ENCODE measurements at regions of chr1 and their contacts with region 1.

Region 1: DNA sequence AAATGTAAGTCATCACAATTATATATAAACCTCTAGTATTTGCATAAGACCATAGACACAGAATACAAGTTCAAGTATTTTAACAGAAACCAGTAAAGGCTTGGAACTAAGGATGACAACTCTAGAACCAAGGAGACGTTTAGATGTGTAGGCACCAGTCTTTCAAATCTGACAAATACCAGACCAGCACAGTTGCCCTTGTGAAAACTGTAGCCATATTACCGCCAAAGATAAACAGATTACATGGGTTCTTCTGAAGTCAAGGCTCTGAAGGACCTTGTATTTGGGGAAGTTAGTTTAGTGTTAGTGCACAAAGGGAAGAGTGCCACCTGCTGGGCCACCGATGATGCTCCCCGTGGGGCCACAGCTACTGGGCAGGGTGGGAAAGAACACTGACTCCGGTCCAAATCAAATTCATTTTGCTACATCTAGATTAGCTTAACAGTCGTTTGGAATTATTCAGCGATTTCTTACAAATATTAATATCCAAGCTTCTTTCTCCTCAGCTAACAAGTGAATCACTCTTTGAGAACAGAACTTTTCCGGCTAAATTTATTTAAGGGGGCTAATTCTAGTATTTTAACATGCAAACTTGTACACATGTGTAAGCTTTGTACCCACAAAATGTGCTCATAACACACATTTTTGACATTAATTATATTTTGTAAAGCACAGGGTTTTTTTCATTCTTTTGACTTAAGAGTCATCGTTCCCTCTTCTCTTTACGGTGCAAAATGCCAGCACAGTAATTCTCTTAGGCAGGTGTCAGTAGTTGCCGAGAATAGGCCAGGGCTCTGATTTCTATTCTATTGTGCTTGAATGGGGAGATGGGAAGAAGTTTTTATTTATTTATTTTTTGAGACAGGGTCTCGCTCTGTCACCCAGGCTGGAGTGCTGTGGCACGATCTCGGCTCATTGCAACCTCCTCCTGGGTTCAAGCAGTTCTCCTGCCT is 8.0 kb upstream of the NIBAN1 start:
- DNase-seq: peak; percentile 59
- H3K4me3 Mint-ChIP-seq: no peak overlapping the region
- H3K27ac Mint-ChIP-seq: no peak overlapping the region
- H3K4me1 Mint-ChIP-seq: peaks cover 10% of the 10 kb centered on the region
- H3K27me3 Mint-ChIP-seq: peaks cover 31% of the 10 kb centered on the region

Region 2: DNA sequence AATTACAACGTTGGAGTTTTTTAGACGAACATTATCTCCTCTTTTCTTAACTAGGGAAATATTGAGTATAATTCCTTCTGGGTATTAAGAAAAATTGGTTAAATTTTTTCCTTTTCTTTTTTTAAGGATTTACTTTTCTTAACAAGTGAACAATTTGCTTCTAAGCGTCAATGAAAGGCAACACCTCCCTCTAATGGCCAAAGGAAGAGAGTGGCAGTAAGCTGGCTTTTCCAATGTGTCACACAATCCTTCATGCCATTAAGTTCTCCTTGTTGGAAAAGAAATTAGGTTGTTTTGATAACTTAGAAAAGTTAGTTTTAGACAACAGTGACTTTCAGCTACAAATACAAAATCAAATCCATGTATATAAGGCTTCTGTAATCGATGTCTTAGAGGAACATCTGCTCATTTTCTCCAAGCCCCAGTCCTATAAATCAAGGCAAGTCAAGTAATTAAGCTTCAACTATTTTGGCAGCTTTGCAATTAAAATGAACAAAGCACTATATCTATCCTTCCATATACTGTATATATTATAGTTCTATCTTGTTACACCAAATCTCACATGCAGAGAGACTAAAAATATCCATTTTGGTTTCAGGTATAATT is 290.5 kb before region 1 on chr1:
- intact Hi-C with region 1: loop called (anchors 5 kb)
- DNase-seq: no peak
- H3K4me3 Mint-ChIP-seq: no peak overlapping the region
- H3K27ac Mint-ChIP-seq: no peak overlapping the region
- H3K4me1 Mint-ChIP-seq: peaks cover 9% of the 10 kb centered on the region
- H3K27me3 Mint-ChIP-seq: no peaks in the 10 kb centered on the region

Region 3: DNA sequence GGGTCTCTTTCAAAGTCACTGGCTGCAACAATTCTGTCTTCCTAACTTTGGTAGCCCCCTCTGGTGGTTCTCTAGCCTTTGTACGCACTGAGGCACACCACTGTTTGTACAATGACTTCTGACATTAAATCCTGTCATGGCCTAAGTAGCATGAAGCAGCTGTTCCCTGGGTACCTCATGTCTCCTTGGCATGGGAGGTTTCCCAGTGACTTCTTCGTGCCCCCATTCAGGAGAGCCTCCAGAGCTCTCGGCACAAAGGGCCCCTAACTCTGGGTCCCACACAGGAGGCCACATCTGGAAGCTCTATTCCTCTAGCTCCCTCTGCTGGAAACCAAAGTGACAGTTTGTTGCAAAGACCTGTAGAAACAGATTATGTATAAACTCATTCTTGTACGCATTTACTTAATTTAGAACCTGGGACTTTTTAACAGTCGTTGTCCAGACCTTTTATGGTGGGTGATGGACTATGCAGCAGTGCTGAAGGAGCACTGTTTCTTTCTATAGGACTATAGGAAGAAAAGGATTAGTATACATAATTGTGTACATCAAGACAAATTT is 188.1 kb after region 1 on chr1:
- intact Hi-C with region 1: loop called (anchors 5 kb)
- DNase-seq: peak; percentile 26
- H3K4me3 Mint-ChIP-seq: no peak overlapping the region
- H3K27ac Mint-ChIP-seq: no peak overlapping the region
- H3K4me1 Mint-ChIP-seq: peaks cover 9% of the 10 kb centered on the region
- H3K27me3 Mint-ChIP-seq: no peaks in the 10 kb centered on the region

Region 4: GRCh38 chr1:185681034-185681633 is 698.9 kb after region 1 on chr1:
- intact Hi-C with region 1: loop called (anchors 5 kb)
- DNase-seq: peak; percentile 20
- H3K4me3 Mint-ChIP-seq: no peak overlapping the region
- H3K27ac Mint-ChIP-seq: no peak overlapping the region
- H3K4me1 Mint-ChIP-seq: peaks cover 21% of the 10 kb centered on the region
- H3K27me3 Mint-ChIP-seq: peaks cover 14% of the 10 kb centered on the region

Measured in activated T-helper 1 cell treated with anti-CD3 and anti-CD28 coated beads, Interleukin-12 subunit alpha, Interleukin-12 subunit beta, Interleukin-2, Interleukin-4 antibody, amounts not matched to agents 30 ng/mL and 10 ng/mL and 1 ng/mL, durations not matched to agents 14 hours and 24 hours and 36 hours (primary cell).